ENCODE measurements at regions of chr19 and their contacts with region 1.

Region 1: GRCh38 chr19:10259162-10259905 is 7.3 kb downstream of the MRPL4 start:
- DNase-seq: peak; percentile 69 to 91
- H3K4me3 ChIP-seq: no peak overlapping the region
- H3K27ac ChIP-seq: no peak overlapping the region
- H3K4me1 ChIP-seq: peaks cover 0 to 2% (median 0%) of the 10 kb centered on the region in 4 experiments; a peak in 2 of 7 replicates
- H3K27me3 ChIP-seq: no peaks in the 10 kb centered on the region
- CTCF ChIP-seq: peak; percentile 76 to 86 (median 81)
- EP300 ChIP-seq: no peak
- POLR2A ChIP-seq: no peak
- RAD21 ChIP-seq: peak; percentile 76 to 80

Region 2: GRCh38 chr19:10085641-10086590 is 173.4 kb before region 1 on chr19 and contains the start of gene SHFL:
- CTCF ChIA-PET with region 1: no interaction called
- POLR2A ChIA-PET with region 1: no interaction called
- DNase-seq: peak in 1 of 2 experiments; percentile 87
- H3K4me3 ChIP-seq: peak within 1 kb of the TSS; percentile 81 to 92 (median 87)
- H3K27ac ChIP-seq: no peak within 1 kb of the TSS
- H3K4me1 ChIP-seq: peaks cover 0 to 4% (median 3%) of the 10 kb centered on the region in 4 experiments; a peak in 4 of 7 replicates
- H3K27me3 ChIP-seq: peaks cover 0 to 2% (median 0%) of the 10 kb centered on the region in 4 experiments; a peak in 1 of 7 replicates
- CTCF ChIP-seq: no peak
- EP300 ChIP-seq: no peak
- POLR2A ChIP-seq: 0 out of 3 replicates have a peak, but pooled peaks of 1 of the 2 experiments have one; percentile 42
- RAD21 ChIP-seq: no peak
- total RNA-seq, gene SHFL: 24.5 and 25.3 TPM in 2 replicates

Region 3: GRCh38 chr19:10152100-10152499 is 107.2 kb before region 1 on chr19:
- CTCF ChIA-PET with region 1: no interaction called
- POLR2A ChIA-PET with region 1: no interaction called
- DNase-seq: no peak
- H3K4me3 ChIP-seq: no peak overlapping the region
- H3K27ac ChIP-seq: no peak overlapping the region
- H3K4me1 ChIP-seq: no peaks in the 10 kb centered on the region
- H3K27me3 ChIP-seq: no peaks in the 10 kb centered on the region
- CTCF ChIP-seq: no peak
- EP300 ChIP-seq: no peak
- POLR2A ChIP-seq: no peak
- RAD21 ChIP-seq: no peak

Region 4: GRCh38 chr19:10194500-10195289 is 64.6 kb before region 1 on chr19 and contains the start of gene DNMT1:
- CTCF ChIA-PET with region 1: interaction called, 7 read pairs
- POLR2A ChIA-PET with region 1: interaction called, 10 read pairs
- DNase-seq: peak; percentile 85 to 99
- H3K4me3 ChIP-seq: peak within 1 kb of the TSS; percentile 64 to 92 (median 80)
- H3K27ac ChIP-seq: peak within 1 kb of the TSS; percentile 83
- H3K4me1 ChIP-seq: no peaks in the 10 kb centered on the region
- H3K27me3 ChIP-seq: no peaks in the 10 kb centered on the region
- CTCF ChIP-seq: no peak
- EP300 ChIP-seq: peak in 1 of 2 experiments; percentile 100; a peak in 2 of 3 replicates
- POLR2A ChIP-seq: peak; percentile 82 to 97
- RAD21 ChIP-seq: no peak; a peak in 1 of 4 replicates
- total RNA-seq, gene DNMT1: 208 and 210 TPM in 2 replicates

Region 5: DNA sequence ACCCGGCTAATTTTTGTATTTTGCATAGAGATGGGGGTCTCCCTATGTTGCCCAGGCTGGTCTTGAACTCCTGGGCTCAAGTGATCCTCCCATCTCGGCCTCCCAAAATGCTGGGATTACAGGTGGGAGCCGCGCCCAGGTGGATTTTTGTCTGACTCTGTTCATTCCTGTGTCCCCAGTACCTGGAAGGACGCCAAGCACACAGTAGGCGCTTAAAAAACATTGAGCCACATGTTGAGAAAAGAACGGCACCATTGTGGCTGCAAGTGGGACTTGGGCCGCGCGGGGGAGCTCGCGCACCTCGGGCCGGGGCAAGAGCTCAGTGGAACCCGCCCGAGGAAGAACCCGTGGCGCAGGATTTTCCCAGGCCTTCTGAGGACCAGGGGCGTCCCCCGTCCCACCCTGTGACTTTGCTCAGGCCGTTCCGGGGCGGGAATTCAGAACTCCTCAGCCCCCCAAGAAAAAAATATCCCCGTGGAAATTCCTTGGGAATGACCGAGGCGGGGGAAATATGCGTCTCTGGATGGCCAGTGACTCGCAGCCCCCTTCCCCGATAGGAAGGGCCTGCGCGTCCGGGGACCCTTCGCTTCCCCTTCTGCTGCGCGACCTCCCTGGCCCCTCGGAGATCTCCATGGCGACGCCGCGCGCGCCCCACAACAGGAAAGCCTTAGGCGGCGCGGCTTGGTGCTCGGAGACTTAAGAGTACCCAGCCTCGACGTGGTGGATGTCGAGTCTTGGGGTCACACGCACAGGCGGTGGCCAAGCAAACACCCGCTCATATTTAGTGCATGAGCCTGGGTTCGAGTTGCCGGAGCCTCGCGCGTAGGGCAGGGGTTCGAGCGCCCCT is 10.2 kb after region 1 on chr19:
- CTCF ChIA-PET with region 1: interaction called, 61 read pairs
- POLR2A ChIA-PET with region 1: interaction called, 18 read pairs
- DNase-seq: peak in 1 of 2 experiments; percentile 99
- H3K4me3 ChIP-seq: peak overlapping the region; percentile 30 to 59 (median 38); a peak in 5 of 8 replicates
- H3K27ac ChIP-seq: no peak overlapping the region
- H3K4me1 ChIP-seq: peaks cover 0 to 8% (median 5%) of the 10 kb centered on the region in 4 experiments; a peak in 5 of 7 replicates
- H3K27me3 ChIP-seq: peaks cover 9 to 25% (median 23%) of the 10 kb centered on the region in 4 experiments
- CTCF ChIP-seq: peak; percentile 79 to 95 (median 88)
- EP300 ChIP-seq: no peak; a peak in 1 of 3 replicates
- POLR2A ChIP-seq: no peak
- RAD21 ChIP-seq: peak; percentile 94 to 97

Region 6: GRCh38 chr19:10292206-10292788 is 33.0 kb after region 1 on chr19:
- CTCF ChIA-PET with region 1: interaction called, 19 read pairs
- POLR2A ChIA-PET with region 1: interaction called, 3 read pairs
- DNase-seq: peak; percentile 82 to 100
- H3K4me3 ChIP-seq: peak overlapping the region; percentile 38 to 67 (median 60); a peak in 7 of 8 replicates
- H3K27ac ChIP-seq: no peak overlapping the region
- H3K4me1 ChIP-seq: peaks cover 0 to 51% (median 24%) of the 10 kb centered on the region in 4 experiments; a peak in 6 of 7 replicates
- H3K27me3 ChIP-seq: peaks cover 58 to 96% (median 89%) of the 10 kb centered on the region in 4 experiments
- CTCF ChIP-seq: no peak
- EP300 ChIP-seq: no peak
- POLR2A ChIP-seq: no peak; a peak in 1 of 3 replicates
- RAD21 ChIP-seq: no peak

Region 7: GRCh38 chr19:10380313-10381102 is 121.2 kb after region 1 on chr19 and contains the start of gene TYK2:
- CTCF ChIA-PET with region 1: interaction called, 122 read pairs
- POLR2A ChIA-PET with region 1: interaction called, 6 read pairs
- DNase-seq: peak; percentile 97 to 98
- H3K4me3 ChIP-seq: peak within 1 kb of the TSS; percentile 73 to 92 (median 87)
- H3K27ac ChIP-seq: peak within 1 kb of the TSS; percentile 97
- H3K4me1 ChIP-seq: peaks cover 0 to 5% (median 1%) of the 10 kb centered on the region in 4 experiments; a peak in 1 of 7 replicates
- H3K27me3 ChIP-seq: no peaks in the 10 kb centered on the region
- CTCF ChIP-seq: no peak
- EP300 ChIP-seq: no peak
- POLR2A ChIP-seq: peak; percentile 88 to 98
- RAD21 ChIP-seq: no peak
- total RNA-seq, gene TYK2: 40.8 and 42.7 TPM in 2 replicates